GM13977 (cell line): ENCODE measurements at regions of chr6 and their contacts with region 1.

Region 1: DNA sequence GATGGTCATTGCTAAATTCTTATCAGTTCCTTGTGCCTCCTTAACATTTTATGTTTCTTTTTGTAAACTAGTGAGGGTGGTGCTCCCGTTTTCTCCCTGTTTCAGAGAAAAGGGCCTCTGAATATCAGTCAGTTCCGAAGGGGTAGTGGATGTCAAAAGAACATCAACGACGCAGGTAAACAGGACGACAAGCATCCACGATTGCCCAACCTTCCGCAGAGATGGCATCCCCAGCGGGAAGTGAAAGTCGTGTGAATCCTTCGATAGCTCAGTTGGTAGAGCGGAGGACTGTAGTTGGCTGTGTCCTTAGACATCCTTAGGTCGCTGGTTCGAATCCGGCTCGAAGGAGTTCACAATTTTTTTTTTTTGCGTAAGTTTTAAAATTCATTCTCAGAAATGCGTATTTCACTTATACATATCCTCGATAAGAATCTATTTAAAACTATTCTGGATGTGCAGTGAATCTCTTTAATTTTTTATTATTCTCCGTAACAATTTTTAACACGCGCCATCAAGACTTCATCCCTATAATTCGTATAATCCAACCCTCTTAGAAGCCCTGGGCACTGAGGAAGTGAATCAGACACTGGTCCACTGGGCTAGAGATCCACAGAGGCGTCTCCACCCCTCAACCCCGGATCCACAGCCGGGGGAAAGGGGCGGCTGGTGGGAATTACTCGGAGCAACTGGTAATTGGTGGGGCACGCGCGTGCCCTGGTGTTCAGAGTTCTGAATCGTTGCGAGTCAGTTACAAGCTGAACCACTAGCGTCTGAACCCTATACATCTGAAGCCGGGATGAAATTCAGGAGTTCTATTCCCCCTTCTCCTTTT is 27.9 kb upstream of the ABT1 start:
- DNase-seq: peak; percentile 85
- CTCF ChIP-seq: peak; percentile 68

Region 2: DNA sequence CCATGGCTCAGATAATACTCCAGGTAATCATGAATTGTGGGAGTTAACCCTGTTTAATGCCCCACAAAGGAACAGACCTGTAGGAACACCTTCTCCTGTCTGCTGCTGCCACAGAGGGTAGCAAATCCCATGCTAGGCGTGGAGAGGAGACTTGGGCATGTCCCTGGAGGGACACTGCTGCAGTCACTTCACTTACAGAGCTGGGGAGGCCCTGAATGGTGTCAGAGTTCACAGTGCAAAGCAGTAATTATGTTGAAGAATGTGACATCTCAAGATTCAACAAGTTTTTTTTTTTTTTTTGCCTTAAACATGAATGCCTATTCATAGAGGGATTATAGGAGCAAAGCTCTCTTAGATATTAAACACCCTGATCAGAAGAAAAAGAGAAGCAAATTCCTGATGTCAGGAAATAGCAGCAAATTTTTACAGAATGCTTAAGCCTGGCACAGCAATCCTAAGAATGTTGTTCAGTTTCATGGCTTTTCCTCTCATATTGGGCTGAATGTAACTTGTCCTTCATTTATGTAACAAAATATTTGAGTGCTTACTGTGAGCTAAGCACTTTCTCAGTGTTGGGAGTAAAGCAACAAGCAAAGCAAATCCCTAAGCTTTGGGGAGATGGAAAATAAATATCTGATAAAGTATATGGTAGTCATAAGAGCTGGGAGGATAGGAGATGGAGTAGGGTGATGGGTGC is 1244.6 kb before region 1 on chr6:
- in situ Hi-C with region 1: no loop called
- DNase-seq: no peak
- CTCF ChIP-seq: no peak

Region 3: DNA sequence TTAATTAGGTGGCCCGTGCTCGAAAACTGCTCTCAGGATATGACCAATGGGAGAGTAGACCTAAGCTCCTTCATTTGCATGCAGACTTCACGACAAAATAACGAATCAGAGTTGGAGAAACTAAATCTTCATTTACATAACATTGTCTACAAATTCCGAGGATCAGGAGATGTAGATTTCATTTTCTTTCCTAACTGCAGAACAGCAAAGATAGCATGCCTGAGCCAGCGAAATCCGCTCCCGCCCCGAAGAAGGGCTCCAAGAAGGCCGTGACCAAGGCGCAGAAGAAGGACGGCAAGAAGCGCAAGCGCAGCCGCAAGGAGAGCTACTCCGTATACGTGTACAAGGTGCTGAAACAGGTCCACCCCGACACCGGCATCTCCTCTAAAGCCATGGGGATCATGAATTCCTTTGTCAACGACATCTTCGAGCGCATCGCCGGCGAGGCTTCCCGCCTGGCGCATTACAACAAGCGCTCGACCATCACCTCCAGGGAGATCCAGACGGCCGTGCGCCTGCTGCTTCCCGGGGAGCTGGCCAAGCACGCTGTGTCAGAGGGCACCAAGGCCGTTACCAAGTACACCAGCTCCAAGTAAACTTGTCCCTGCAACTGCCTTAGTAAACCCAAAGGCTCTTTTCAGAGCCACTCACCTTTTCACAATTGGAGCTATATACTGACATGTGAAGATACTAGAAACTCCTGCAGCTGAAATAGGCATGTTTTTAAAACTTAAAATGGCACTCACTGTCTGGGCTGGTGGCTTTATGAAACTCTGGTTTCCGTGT is 385.0 kb before region 1 on chr6:
- in situ Hi-C with region 1: loop called (anchors 10 kb)
- DNase-seq: peak; percentile 26
- CTCF ChIP-seq: no peak

Region 4: DNA sequence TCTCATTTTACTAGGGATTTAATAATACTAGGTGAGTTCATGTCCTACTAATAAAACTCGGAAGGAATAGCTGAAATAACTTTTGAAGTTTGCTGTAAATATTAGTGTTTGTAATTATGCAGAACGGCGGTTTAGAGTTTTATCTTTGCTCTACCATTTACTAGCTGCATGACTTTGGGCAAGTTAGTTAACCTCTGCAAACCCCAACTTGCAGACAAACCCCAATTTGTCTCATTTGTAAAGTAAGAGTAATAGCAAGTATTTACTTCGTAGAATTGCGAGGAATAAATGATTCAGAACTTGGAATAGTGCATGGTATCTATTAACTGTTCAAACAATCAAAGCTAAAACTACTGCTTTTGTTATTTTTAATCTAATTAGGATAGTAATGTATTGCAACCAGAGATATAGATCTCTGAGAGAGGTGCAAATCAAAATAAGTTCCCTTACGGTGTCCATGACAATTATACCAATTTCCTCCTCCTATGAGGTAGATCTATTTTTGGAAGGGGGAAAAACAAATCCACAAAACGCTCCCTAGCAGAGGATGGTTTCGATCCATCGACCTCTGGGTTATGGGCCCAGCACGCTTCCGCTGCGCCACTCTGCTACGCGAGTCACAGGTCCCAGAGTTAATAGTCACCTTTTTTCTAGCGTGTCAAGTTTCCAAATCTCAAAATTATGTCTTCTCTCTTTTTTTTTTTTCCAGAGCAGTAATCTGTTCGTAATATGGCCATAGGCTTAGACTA is 238.9 kb before region 1 on chr6:
- in situ Hi-C with region 1: loop called (anchors 10 kb)
- DNase-seq: no peak
- CTCF ChIP-seq: no peak